Activated naive CD4-positive, alpha-beta T cell treated with anti-CD3 and anti-CD28 coated beads, Interleukin-2, amount 10 ng/mL, durations not matched to agents 7 days and 5 days (primary cell): ENCODE measurements at regions of chr1 and their contacts with region 1.

Region 1: DNA sequence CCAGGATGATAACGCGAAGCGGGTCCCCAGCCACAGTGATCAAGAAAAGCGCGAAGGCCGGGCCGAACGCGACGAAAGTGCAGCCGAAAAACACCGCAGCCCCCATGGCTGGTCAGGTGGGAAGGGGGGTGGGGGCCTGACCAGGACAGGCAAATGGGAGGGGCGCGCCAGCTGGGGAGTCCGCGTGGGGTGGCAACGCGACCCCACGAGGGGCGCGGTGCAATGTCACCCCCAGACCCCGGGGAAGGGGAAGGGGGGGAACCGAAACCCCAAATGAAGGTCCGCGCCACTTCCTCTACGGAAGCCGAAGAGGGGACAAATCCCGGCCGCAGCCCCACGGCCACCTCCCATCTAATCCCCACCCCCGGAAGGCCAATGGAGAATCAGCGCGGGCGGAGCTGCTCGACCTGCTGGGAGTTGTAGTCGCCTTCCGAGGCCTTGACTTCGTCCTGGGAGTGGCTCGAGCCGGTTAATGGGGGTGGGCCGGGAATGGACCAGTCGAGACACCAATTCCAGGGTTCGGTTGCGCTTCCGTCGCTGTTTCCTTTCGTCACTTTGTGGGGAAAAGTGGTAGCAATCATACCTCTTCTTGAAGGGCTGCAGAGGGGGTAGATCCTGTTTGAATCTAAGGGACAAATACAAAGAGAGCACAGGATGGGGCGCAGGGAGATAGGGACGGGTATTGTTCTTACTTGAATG is at the start of gene APH1A:
- DNase-seq: peak; percentile 97
- H3K4me3 Mint-ChIP-seq: peak within 1 kb of the TSS; percentile 86
- H3K27ac Mint-ChIP-seq: peak within 1 kb of the TSS; percentile 98
- H3K4me1 Mint-ChIP-seq: peaks cover 31% of the 10 kb centered on the region
- H3K27me3 Mint-ChIP-seq: peaks cover 4% of the 10 kb centered on the region

Region 2: DNA sequence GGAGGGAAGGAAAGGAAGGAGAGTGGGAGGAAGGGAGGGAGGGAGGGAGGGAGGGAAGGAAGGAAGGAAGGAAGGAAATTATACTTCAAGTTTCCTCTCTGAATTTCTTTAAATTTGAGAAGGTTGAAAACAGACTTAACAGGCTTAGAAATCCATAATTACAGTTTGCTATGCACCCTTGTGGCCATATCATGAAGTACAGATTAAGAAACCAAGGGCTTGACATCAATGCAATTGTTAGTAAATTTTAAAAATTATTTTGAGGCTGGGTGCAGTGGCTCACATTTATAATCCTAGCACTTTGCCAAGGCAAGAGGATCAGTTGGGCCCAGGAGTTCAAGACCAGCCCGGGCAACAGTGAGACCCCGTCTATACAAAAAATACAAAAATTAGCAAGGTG is 47.3 kb before region 1 on chr1:
- CTCF ChIA-PET with region 1: no interaction called
- DNase-seq: no peak
- H3K4me3 Mint-ChIP-seq: no peak overlapping the region
- H3K27ac Mint-ChIP-seq: no peak overlapping the region
- H3K4me1 Mint-ChIP-seq: peaks cover 4% of the 10 kb centered on the region
- H3K27me3 Mint-ChIP-seq: no peaks in the 10 kb centered on the region

Region 3: DNA sequence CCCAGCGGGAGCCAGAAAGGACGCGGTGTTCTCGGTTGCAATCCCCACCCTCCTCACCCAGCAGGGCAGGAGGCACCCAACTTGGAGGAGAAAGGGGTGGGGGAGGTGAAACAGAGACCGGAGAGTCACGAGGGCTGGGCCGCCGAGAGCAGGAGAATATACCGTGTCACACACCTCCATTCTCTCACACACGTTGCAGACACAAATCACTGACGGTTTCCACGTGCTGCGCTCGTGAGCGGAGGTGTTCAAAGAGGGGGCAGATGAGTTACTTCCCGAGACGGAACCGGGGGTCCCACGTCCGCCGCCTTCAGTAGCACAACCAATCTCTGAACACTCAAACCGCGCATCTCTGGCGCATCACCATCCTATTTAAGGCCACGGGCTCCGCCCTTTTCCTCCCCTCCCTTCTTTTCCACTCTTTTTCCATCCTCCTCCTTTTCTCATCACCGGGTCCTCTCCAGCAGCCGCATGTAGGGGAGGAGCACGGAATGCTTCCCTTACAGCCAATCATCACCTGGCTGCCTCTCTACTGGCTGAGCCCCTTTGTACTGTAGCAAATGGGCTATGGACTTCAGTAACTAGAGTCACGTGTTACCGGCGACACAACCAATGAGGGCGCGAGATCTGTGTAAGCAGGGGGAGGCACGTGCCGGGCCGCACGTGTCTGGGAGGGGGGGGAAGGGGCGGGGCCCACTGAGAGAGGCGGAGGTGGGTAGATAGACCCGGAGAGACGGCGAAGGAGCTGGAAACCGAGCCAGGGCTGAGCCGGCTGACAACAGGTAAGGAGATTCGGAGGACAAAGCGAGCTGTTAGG is 13.2 kb after region 1 on chr1 and contains the start of gene CIART:
- CTCF ChIA-PET with region 1: interaction called, 12 read pairs
- DNase-seq: peak; percentile 89
- H3K4me3 Mint-ChIP-seq: peak within 1 kb of the TSS; percentile 77
- H3K27ac Mint-ChIP-seq: peak within 1 kb of the TSS; percentile 82
- H3K4me1 Mint-ChIP-seq: peaks cover 29% of the 10 kb centered on the region
- H3K27me3 Mint-ChIP-seq: peaks cover 31% of the 10 kb centered on the region